ENCODE measurements at regions of chr1 and their contacts with region 1.

Region 1: DNA sequence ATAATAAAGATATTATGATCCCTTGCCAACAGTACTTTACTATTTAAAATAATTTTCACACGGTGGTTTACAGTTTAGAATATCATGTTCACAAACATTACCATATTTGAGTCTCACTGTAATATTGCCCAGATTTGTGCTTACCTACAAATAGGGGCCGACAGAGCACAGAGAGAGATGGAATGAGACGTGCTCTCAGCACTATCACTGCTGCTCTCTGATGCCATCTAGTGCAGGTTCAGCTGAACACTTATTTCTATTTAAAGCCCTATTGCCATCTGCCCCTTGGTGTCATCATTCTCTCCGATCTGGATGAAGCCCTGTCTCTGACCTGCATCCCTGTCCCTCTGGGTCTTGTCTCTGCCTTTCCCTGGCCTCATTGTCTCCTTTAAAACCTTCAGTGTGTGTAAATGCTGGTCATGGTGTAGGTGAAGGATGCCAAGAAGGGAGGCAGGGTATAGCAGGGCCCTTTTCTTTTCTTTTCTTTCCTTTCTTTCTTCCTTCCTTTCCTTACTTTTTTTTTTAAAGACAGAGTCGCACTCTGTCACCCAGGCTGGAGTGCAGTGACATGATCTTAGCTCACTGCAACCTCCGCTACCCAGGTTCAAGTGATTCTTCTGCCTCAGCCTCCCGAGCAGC is 6.9 kb upstream of the GPATCH4 start:
- DNase-seq: peak; percentile 65
- H3K4me3 ChIP-seq: peak overlapping the region in 1 of 2 experiments; percentile 18; a peak in 1 of 4 replicates
- H3K27ac ChIP-seq: no peak overlapping the region
- H3K4me1 ChIP-seq: peaks cover 0 to 2% of the 10 kb centered on the region in 2 experiments; a peak in 1 of 4 replicates
- H3K27me3 ChIP-seq: no peaks in the 10 kb centered on the region
- CTCF ChIP-seq: peak; percentile 81
- EP300 ChIP-seq: no peak
- RAD21 ChIP-seq: peak; percentile 81

Region 2: GRCh38 chr1:156571949-156572662 is 36.0 kb before region 1 on chr1 and contains the start of gene IQGAP3:
- CTCF ChIA-PET with region 1: interaction called, 13 read pairs
- POLR2A ChIA-PET with region 1: no interaction called
- DNase-seq: peak; percentile 94
- H3K4me3 ChIP-seq: peak within 1 kb of the TSS; percentile 67 to 72
- H3K27ac ChIP-seq: peak within 1 kb of the TSS in 1 of 2 experiments; percentile 83; a peak in 2 of 4 replicates
- H3K4me1 ChIP-seq: peaks cover 7 to 15% of the 10 kb centered on the region in 2 experiments; a peak in 3 of 4 replicates
- H3K27me3 ChIP-seq: no peaks in the 10 kb centered on the region
- CTCF ChIP-seq: no peak
- EP300 ChIP-seq: no peak
- RAD21 ChIP-seq: no peak
- polyA plus RNA-seq, gene IQGAP3: 14.4 and 15.6 TPM in 2 replicates

Region 3: DNA sequence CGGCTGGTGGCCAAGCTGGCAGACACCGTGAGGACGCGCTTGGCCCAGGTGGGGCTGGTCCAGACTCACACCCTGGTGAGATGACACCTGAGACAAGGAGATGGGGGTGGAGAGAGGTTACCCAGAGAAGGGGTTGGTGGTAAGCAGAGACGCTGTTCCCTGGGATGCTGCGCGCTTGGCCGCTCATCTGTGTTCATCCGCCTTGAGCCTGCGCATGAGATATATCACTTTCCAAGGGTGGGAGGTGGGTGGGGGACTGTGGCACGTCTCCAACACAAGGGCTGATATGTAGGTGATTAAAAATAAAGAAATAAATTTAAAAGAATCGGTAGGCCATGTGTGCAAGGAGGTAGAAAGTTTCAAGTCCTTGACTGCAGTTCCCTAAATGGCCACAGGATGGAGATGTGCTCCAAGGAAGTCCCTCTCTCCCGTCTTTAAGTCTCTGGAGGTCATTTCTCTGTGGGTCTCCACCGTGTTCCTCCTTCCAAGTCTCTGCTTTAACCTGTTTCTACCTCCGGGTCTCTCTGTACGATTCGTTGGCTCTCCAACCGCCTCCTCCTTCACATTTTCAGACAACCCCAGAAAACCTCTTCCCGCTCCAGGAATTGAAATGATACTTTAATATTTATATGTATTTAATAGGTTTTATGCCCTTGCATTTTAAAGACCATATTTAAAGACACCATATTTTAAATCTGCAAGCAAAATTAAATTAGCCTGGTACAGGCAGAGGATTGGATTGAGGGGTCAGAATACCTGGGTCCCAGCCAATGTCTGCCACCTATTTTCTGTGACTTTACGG is 24.1 kb before region 1 on chr1:
- CTCF ChIA-PET with region 1: interaction called, 104 read pairs
- POLR2A ChIA-PET with region 1: interaction called, 3 read pairs
- DNase-seq: peak; percentile 78
- H3K4me3 ChIP-seq: no peak overlapping the region
- H3K27ac ChIP-seq: no peak overlapping the region
- H3K4me1 ChIP-seq: no peaks in the 10 kb centered on the region
- H3K27me3 ChIP-seq: no peaks in the 10 kb centered on the region
- CTCF ChIP-seq: peak; percentile 88
- EP300 ChIP-seq: no peak
- RAD21 ChIP-seq: peak; percentile 89

Region 4: DNA sequence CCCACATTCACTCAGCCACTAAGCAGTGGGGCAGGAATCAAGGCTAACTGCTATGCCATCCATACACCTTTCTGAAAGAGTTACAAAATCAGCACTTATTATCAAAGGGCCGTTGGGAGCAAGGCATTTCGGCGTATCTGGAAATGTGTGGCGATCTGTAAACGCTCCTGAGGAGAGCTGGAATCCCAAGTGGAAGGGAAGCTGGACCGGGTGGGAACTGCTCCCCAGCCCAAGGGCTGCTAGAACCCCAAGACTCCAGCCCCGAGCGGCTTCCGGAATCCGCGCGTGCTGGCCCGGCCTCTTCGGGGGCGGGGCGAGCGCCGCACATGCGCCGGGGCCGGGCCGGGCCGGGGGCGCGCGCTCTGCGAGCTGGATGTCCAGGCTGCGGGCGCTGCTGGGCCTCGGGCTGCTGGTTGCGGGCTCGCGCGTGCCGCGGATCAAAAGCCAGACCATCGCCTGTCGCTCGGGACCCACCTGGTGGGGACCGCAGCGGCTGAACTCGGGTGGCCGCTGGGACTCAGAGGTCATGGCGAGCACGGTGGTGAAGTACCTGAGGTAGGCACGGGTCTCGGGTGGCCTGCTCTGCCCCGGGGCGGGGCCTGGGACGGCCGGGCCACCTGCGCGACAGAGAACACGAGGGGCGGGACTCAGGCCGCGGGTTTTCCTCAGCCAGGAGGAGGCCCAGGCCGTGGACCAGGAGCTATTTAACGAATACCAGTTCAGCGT is 16.6 kb before region 1 on chr1 and contains the start of gene NAXE:
- CTCF ChIA-PET with region 1: interaction called, 104 read pairs
- POLR2A ChIA-PET with region 1: interaction called, 3 read pairs
- DNase-seq: peak; percentile 95
- H3K4me3 ChIP-seq: peak within 1 kb of the TSS; percentile 83 to 86
- H3K27ac ChIP-seq: peak within 1 kb of the TSS; percentile 64 to 93
- H3K4me1 ChIP-seq: peaks cover 0 to 16% of the 10 kb centered on the region in 2 experiments; a peak in 2 of 4 replicates
- H3K27me3 ChIP-seq: no peaks in the 10 kb centered on the region
- CTCF ChIP-seq: no peak
- EP300 ChIP-seq: no peak
- RAD21 ChIP-seq: no peak
- polyA plus RNA-seq, gene NAXE: 68.5 and 98.4 TPM in 2 replicates

Region 5: GRCh38 chr1:156659994-156660751 is 52.0 kb after region 1 on chr1:
- CTCF ChIA-PET with region 1: interaction called, 643 read pairs
- POLR2A ChIA-PET with region 1: no interaction called
- DNase-seq: peak; percentile 99
- H3K4me3 ChIP-seq: peak overlapping the region; percentile 34 to 54; a peak in 2 of 4 replicates
- H3K27ac ChIP-seq: peak overlapping the region; percentile 72 to 87
- H3K4me1 ChIP-seq: peaks cover 44 to 48% of the 10 kb centered on the region in 2 experiments; a peak in 3 of 4 replicates
- H3K27me3 ChIP-seq: no peaks in the 10 kb centered on the region
- CTCF ChIP-seq: peak; percentile 99
- EP300 ChIP-seq: peak in 1 of 2 experiments; percentile 37; a peak in 1 of 4 replicates
- RAD21 ChIP-seq: peak; percentile 90

Measured in SK-N-SH (cell line).